Activated B cell treated with CpG ODN at 0.5 μM for 24 hours (primary cell): ENCODE measurements at regions of chr7 and their contacts with region 1.

Region 1: GRCh38 chr7:28013441-28013840 is 167.2 kb downstream of the JAZF1 start:
- DNase-seq: no peak
- ATAC-seq: no peak
- H3K4me3 Mint-ChIP-seq: no peak overlapping the region
- H3K27ac Mint-ChIP-seq: no peak overlapping the region
- H3K4me1 Mint-ChIP-seq: peaks cover 35% of the 10 kb centered on the region
- H3K27me3 Mint-ChIP-seq: no peaks in the 10 kb centered on the region
- CTCF ChIP-seq: no peak

Region 2: DNA sequence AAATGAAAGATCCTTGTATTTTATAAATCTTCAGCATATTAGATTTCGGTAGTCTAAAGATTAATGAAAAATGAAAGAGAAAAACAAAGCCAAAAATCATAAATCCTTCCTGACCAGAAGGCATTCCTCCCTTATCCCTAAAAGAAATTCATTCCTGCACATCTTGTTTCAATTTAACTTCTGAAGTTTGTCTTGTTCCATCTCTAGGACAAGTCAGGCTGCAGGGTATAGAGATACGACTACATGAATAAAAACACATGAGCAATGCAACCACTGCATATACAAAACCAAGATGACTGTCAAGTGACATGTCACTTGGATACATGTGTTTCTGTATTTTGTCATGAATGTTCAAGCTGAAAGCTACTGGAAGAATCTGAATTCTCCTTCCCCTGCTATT is 47.8 kb before region 1 on chr7:
- CTCF ChIA-PET with region 1: no interaction called
- POLR2A ChIA-PET with region 1: no interaction called
- intact Hi-C with region 1: loop called (anchors 5 kb)
- DNase-seq: no peak
- ATAC-seq: no peak
- H3K4me3 Mint-ChIP-seq: no peak overlapping the region
- H3K27ac Mint-ChIP-seq: no peak overlapping the region
- H3K4me1 Mint-ChIP-seq: peaks cover 51% of the 10 kb centered on the region
- H3K27me3 Mint-ChIP-seq: no peaks in the 10 kb centered on the region
- CTCF ChIP-seq: no peak